PC-9 (cell line): ENCODE measurements at regions of chr14 and their contacts with region 1.

Region 1: DNA sequence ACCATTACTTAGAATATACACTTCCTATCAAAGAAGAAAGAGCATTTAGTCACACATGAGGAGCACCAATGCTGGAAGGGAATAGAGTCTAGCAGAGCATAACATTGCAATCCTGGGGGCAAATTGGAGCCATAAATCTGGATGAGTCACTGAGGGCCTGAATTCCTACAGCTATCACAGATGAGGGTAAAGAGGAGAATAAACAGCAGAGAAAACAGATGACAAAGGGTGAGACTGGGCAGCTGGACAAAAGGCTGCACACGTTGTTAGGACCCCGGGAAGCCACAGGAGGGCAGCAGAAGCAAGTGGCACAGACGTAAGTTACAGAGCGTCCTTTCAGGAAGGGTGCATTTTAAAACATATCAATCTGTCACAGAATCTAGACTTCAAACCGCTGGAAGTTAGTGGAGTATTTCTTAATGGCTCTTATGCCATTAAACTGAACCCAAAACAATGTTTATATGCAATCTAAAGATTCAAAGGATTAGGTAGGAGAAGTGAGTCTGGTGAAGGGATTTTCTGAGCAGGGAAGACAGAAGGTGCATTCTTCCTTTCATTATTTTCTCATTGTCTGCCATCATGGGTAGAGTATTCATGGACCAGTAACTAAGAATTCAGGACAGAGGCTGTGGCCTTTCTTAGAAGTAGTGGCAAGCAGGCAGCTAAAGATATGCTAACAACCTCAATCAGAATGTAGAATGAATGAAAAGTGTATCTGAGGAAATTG is 159.8 kb upstream of the DAAM1 start:
- DNase-seq: peak; percentile 56 to 57
- H3K4me3 ChIP-seq: no peak overlapping the region
- H3K27ac ChIP-seq: no peak overlapping the region
- H3K4me1 ChIP-seq: no peaks in the 10 kb centered on the region
- H3K27me3 ChIP-seq: no peaks in the 10 kb centered on the region
- CTCF ChIP-seq: peak; percentile 79

Region 2: GRCh38 chr14:58501214-58501816 is 527.3 kb before region 1 on chr14:
- CTCF ChIA-PET with region 1: no interaction called
- POLR2A ChIA-PET with region 1: no interaction called
- intact Hi-C with region 1: loop called (anchors 1 kb)
- DNase-seq: peak; percentile 2 to 51
- H3K4me3 ChIP-seq: no peak overlapping the region
- H3K27ac ChIP-seq: no peak overlapping the region
- H3K4me1 ChIP-seq: no peaks in the 10 kb centered on the region
- H3K27me3 ChIP-seq: no peaks in the 10 kb centered on the region
- CTCF ChIP-seq: peak; percentile 86

Region 3: GRCh38 chr14:59013672-59014298 is 14.9 kb before region 1 on chr14:
- CTCF ChIA-PET with region 1: no interaction called
- POLR2A ChIA-PET with region 1: no interaction called
- intact Hi-C with region 1: no loop called
- DNase-seq: no peak
- H3K4me3 ChIP-seq: no peak overlapping the region
- H3K27ac ChIP-seq: no peak overlapping the region
- H3K4me1 ChIP-seq: no peaks in the 10 kb centered on the region
- H3K27me3 ChIP-seq: no peaks in the 10 kb centered on the region
- CTCF ChIP-seq: no peak

Region 4: DNA sequence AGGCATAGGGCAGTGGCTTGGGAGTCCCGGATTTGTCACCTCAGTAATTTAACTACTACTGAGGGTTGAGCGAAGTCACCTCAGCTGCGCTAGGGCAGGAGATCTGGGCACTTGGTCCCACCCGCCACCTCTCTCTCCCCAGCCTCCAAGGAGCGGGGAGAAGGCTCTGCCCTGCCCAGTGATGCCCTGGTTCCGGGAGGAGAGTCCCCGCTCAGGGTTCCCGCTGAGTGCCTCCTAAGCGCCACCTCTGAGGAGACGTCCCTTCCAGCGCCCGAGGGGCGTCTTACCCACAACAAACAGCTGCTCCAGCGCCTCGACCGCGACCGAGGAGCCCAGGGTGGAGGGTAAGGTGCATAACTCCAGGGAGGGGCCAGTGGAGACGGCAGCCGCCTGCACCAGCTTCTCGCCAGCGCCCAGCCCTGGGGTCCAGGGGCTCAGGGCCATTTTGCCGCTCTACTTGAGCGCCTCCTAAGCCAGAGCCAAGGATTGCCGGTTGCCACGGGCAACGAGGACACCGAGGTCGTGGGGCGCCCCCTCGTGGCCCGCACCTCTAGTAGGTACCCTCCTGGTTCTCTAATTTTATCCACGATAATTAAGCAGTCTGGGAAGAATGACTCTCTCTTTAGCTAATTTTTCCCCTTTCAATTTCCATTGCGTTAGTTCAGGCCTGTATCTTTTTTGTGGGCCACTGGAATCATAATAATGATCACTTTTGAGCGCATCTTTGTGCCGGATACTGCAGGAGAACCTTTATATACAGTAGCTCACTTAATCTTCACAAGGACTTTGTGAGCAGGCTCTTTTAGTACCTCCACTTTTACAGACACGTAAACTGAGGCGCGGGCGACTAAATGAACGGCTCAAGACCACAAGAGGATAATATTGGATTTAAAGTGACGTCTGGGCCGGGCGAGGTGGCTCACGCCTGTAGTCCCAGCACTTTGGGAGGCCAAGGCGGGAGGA is 548.0 kb after region 1 on chr14 and contains the start of gene CCDC175:
- CTCF ChIA-PET with region 1: no interaction called
- POLR2A ChIA-PET with region 1: no interaction called
- intact Hi-C with region 1: loop called (anchors 2 kb)
- DNase-seq: peak in 1 of 2 experiments; percentile 48
- H3K4me3 ChIP-seq: no peak within 1 kb of the TSS
- H3K27ac ChIP-seq: no peak within 1 kb of the TSS
- H3K4me1 ChIP-seq: no peaks in the 10 kb centered on the region
- H3K27me3 ChIP-seq: no peaks in the 10 kb centered on the region
- CTCF ChIP-seq: peak; percentile 53; the same call in 1 of the 2 replicates
- total RNA-seq, gene CCDC175: not detected in 2 replicates

Region 5: GRCh38 chr14:59688224-59689170 is 659.9 kb after region 1 on chr14:
- CTCF ChIA-PET with region 1: no interaction called
- POLR2A ChIA-PET with region 1: no interaction called
- intact Hi-C with region 1: loop called (anchors 10 kb)
- DNase-seq: peak in 1 of 2 experiments; percentile 29
- H3K4me3 ChIP-seq: no peak overlapping the region
- H3K27ac ChIP-seq: no peak overlapping the region
- H3K4me1 ChIP-seq: no peaks in the 10 kb centered on the region
- H3K27me3 ChIP-seq: no peaks in the 10 kb centered on the region
- CTCF ChIP-seq: peak; percentile 79

Region 6: DNA sequence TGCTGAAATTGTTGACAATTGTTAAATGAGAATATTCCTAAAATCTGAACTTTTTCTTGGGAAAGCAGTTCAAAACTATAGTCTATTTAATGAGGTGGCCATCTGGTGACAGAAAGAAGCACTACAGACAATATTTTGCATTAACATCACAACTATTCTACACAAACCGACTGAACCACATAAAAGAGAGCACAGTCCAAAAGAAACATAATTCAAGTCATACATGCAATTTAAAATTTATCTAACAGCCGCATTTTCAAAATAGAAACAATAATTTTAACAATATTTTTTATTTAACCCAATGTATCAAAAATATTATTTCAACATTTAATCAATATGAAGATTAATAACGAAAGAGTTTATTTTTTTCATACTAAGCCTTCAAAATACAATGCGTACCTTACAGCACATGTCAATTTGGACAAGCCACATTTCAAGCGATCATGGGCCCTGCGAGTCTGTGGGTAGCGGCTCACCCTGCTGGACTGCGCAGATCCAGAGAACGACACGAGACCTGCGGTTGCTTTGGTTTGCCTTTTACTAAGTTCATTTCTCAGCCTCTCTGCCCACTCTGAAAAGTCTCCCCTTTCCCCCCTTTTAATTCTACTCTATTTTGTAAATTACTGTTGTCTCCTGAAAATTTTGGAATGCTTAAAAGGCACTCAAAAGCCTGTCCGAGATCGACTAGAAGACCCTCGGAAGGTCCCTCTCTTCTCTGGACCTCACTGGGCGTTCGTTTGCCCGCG is 890.4 kb after region 1 on chr14:
- CTCF ChIA-PET with region 1: no interaction called
- POLR2A ChIA-PET with region 1: no interaction called
- intact Hi-C with region 1: loop called (anchors 10 kb)
- DNase-seq: no peak
- H3K4me3 ChIP-seq: no peak overlapping the region
- H3K27ac ChIP-seq: no peak overlapping the region
- H3K4me1 ChIP-seq: no peaks in the 10 kb centered on the region
- H3K27me3 ChIP-seq: no peaks in the 10 kb centered on the region
- CTCF ChIP-seq: peak; percentile 65